Testis (tissue), 5 donors: ENCODE measurements at regions of chr3 and their contacts with region 1.

Region 1: DNA sequence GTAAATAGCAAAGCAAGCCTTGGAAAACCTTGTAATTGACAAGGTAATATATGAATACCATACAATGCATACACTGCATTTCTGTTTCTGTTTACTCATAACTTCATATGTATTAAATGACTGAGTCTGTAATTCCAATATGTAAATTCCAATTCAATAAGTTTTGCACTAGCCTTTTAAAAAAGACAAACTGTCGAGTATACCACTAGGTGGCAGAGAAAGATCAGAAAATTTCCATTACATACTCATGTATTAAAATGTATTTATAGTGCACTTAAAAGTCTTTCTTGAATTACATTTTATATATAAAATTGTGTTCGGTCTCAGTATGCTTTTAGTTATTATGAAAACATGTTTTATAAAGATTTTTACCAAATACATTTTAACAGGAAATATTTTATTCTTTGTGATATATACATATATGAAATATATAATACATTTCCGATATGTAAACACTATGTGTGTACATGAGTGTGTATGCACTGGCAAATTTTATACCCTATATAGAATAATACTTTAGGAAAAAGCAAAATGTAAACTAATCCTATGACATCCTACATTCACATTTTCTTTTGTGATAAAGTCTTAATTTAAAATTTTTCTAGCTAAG is 216.8 kb downstream of the VGLL3 start:
- DNase-seq: no peak
- H3K4me3 ChIP-seq: no peak overlapping the region
- H3K27ac ChIP-seq: no peak overlapping the region
- H3K4me1 ChIP-seq: no peaks in the 10 kb centered on the region
- H3K27me3 ChIP-seq: no peaks in the 10 kb centered on the region
- CTCF ChIP-seq: peak in 1 of 3 experiments; percentile 55
- POLR2A ChIP-seq: no peak

Region 2: GRCh38 chr3:86684486-86684885 is 89.7 kb before region 1 on chr3:
- intact Hi-C with region 1: no loop called
- DNase-seq: no peak
- H3K4me3 ChIP-seq: no peak overlapping the region
- H3K27ac ChIP-seq: no peak overlapping the region
- H3K4me1 ChIP-seq: no peaks in the 10 kb centered on the region
- H3K27me3 ChIP-seq: no peaks in the 10 kb centered on the region
- CTCF ChIP-seq: no peak
- POLR2A ChIP-seq: no peak

Region 3: DNA sequence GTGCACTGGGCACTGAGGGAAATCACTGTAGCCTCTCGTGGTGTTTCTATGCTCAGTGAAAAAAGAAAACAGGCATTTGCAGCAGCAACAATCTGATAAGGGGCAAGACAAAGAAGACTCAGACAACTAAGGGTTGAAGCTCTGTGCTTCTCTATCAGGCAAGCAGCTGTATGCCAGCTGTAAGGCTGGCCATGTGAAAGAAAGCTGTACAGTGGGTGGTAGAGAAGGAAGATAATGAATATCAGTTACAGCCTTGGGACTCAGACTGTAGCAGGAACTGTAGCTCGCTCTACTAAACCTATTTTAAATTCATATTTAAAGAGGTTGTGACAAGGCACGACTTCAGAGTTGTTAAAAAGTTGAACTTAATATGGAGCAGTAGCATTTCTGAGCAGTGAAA is 140.5 kb after region 1 on chr3:
- intact Hi-C with region 1: no loop called
- DNase-seq: no peak
- H3K4me3 ChIP-seq: no peak overlapping the region
- H3K27ac ChIP-seq: no peak overlapping the region
- H3K4me1 ChIP-seq: no peaks in the 10 kb centered on the region
- H3K27me3 ChIP-seq: no peaks in the 10 kb centered on the region
- CTCF ChIP-seq: no peak
- POLR2A ChIP-seq: no peak

Region 4: DNA sequence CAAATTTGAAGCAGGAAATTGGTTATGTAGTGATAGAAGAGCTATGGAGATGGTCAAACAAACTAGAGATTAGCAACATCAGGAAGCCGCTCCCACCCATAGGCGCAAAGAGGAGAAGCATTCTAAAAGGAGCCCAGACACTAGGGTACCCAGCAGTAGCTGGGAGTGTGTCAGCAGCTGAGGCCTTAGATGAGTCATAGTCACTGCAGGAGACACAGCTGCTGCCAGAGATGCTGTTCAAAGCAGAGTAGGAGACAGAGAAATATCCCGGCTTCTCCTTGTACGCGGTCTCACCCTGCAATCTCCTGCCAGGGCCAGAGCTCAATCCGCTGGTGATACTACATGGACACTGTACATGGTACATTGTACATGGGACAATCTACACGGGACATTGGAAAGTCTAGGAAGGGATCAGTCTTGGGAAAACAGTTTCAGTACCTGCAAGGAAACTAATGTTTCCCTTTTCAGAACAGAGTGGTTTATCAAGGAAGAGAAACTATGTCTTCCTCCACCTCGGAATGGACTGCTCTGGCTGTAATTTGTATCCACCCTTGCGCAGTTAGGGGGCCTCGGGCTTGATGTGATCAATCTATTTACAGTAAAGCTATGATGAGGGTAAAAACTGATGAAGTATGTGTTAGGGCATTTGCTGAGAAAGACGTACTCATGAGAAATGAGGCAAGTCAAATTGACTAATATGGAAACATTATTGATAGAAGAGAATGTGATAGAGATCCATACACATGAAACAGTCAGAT is 155.0 kb after region 1 on chr3:
- intact Hi-C with region 1: no loop called
- DNase-seq: no peak
- H3K4me3 ChIP-seq: no peak overlapping the region
- H3K27ac ChIP-seq: no peak overlapping the region
- H3K4me1 ChIP-seq: no peaks in the 10 kb centered on the region
- H3K27me3 ChIP-seq: no peaks in the 10 kb centered on the region
- CTCF ChIP-seq: no peak
- POLR2A ChIP-seq: no peak

Region 5: GRCh38 chr3:87041191-87041590 is 267.0 kb after region 1 on chr3:
- intact Hi-C with region 1: no loop called
- DNase-seq: no peak
- H3K4me3 ChIP-seq: no peak overlapping the region
- H3K27ac ChIP-seq: no peak overlapping the region
- H3K4me1 ChIP-seq: no peaks in the 10 kb centered on the region
- H3K27me3 ChIP-seq: no peaks in the 10 kb centered on the region
- CTCF ChIP-seq: no peak
- POLR2A ChIP-seq: no peak

Region 6: GRCh38 chr3:87167628-87168456 is 393.7 kb after region 1 on chr3:
- intact Hi-C with region 1: loop called (anchors 10 kb)
- DNase-seq: peak; percentile 53
- H3K4me3 ChIP-seq: peak overlapping the region in 1 of 2 donors; percentile 24
- H3K27ac ChIP-seq: no peak overlapping the region
- H3K4me1 ChIP-seq: no peaks in the 10 kb centered on the region
- H3K27me3 ChIP-seq: no peaks in the 10 kb centered on the region
- CTCF ChIP-seq: peak in 2 of 3 experiments; percentile 68 to 70
- POLR2A ChIP-seq: no peak